Activated B cell treated with CpG ODN at 0.5 μM for 24 hours (primary cell): ENCODE measurements at regions of chr16 and their contacts with region 1.

Region 1: GRCh38 chr16:64380751-64381150 is 741.1 kb downstream of the CDH11 start:
- DNase-seq: no peak
- ATAC-seq: no peak
- H3K4me3 Mint-ChIP-seq: no peak overlapping the region
- H3K27ac Mint-ChIP-seq: no peak overlapping the region
- H3K4me1 Mint-ChIP-seq: no peaks in the 10 kb centered on the region
- H3K27me3 Mint-ChIP-seq: no peaks in the 10 kb centered on the region
- CTCF ChIP-seq: no peak

Region 2: DNA sequence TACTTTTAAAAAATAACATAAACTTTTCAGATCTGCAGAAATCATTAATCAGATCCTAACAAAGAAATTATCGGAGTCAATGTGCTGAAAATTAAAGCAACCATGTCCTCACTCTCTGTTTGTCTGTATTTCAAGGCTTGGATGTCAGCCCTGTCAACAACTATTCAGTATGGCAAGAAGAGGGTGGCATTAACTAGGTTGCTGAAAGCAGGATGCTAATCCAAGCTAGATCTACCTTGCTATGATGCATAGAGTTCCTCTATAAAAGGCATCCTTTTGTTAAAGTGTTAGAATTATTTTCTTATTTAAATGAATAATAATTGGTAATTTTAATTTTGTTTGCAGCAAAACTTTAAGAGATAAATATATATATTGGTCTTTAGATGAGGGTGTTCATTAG is 59.7 kb before region 1 on chr16:
- CTCF ChIA-PET with region 1: no interaction called
- POLR2A ChIA-PET with region 1: no interaction called
- intact Hi-C with region 1: loop called (anchors 10 kb)
- DNase-seq: no peak
- ATAC-seq: no peak
- H3K4me3 Mint-ChIP-seq: no peak overlapping the region
- H3K27ac Mint-ChIP-seq: no peak overlapping the region
- H3K4me1 Mint-ChIP-seq: no peaks in the 10 kb centered on the region
- H3K27me3 Mint-ChIP-seq: no peaks in the 10 kb centered on the region
- CTCF ChIP-seq: no peak